ENCODE measurements at regions of chr20 and their contacts with region 1.

Region 1: GRCh38 chr20:62500237-62500864 is 24.6 kb upstream of the GATA5 start:
- DNase-seq: peak; percentile 40 to 80
- ATAC-seq: peak; percentile 55 to 77; a peak in 5 of 6 replicates
- H3K4me3 ChIP-seq: no peak overlapping the region
- H3K27ac ChIP-seq: no peak overlapping the region
- H3K4me1 ChIP-seq: peaks cover 14% of the 10 kb centered on the region
- CTCF ChIP-seq: peak; percentile 76
- EP300 ChIP-seq: no peak
- POLR2A ChIP-seq: no peak
- RAD21 ChIP-seq: peak; percentile 74 to 75

Region 2: GRCh38 chr20:62472138-62472940 is 28.0 kb before region 1 on chr20:
- CTCF ChIA-PET with region 1: interaction called, 11 read pairs
- POLR2A ChIA-PET with region 1: no interaction called
- DNase-seq: no peak
- ATAC-seq: no peak
- H3K4me3 ChIP-seq: no peak overlapping the region
- H3K27ac ChIP-seq: no peak overlapping the region
- H3K4me1 ChIP-seq: peaks cover 4% of the 10 kb centered on the region; the same call in 1 of the 3 replicates
- CTCF ChIP-seq: no peak
- EP300 ChIP-seq: no peak
- POLR2A ChIP-seq: no peak
- RAD21 ChIP-seq: no peak

Region 3: GRCh38 chr20:62487561-62488306 is 12.6 kb before region 1 on chr20:
- CTCF ChIA-PET with region 1: interaction called, 21 read pairs
- POLR2A ChIA-PET with region 1: no interaction called
- DNase-seq: no peak
- ATAC-seq: no peak
- H3K4me3 ChIP-seq: no peak overlapping the region
- H3K27ac ChIP-seq: no peak overlapping the region
- H3K4me1 ChIP-seq: peaks cover 14% of the 10 kb centered on the region
- CTCF ChIP-seq: no peak
- EP300 ChIP-seq: no peak
- POLR2A ChIP-seq: no peak
- RAD21 ChIP-seq: no peak

Region 4: GRCh38 chr20:62529896-62530642 is 29.7 kb after region 1 on chr20:
- CTCF ChIA-PET with region 1: interaction called, 14 read pairs
- POLR2A ChIA-PET with region 1: no interaction called
- DNase-seq: no peak
- ATAC-seq: no peak
- H3K4me3 ChIP-seq: no peak overlapping the region
- H3K27ac ChIP-seq: no peak overlapping the region
- H3K4me1 ChIP-seq: no peaks in the 10 kb centered on the region
- CTCF ChIP-seq: no peak
- EP300 ChIP-seq: no peak
- POLR2A ChIP-seq: no peak
- RAD21 ChIP-seq: no peak

Region 5: DNA sequence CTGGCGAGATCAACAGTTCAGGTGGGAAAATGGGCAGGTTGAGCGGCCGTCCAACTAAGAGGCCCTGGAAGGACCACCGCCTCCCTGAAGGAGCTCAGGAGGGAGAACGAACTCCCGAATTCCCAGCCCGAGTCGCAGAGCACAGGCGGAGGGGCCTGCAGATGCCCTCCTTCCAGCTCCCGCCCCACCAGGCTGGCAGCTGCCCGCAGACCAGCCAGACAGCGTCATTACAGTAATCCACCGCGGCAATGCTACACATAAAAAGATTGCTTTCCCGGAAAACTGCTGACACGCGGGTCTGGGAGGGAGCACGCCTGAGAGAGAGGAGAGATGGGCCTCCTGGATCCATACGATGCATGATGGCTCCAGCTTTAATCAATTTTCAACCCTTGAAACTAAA is 111.5 kb after region 1 on chr20:
- CTCF ChIA-PET with region 1: interaction called, 29 read pairs
- POLR2A ChIA-PET with region 1: no interaction called
- DNase-seq: no peak
- ATAC-seq: no peak
- H3K4me3 ChIP-seq: no peak overlapping the region
- H3K27ac ChIP-seq: no peak overlapping the region
- H3K4me1 ChIP-seq: no peaks in the 10 kb centered on the region; the same call in 2 of the 3 replicates
- CTCF ChIP-seq: no peak
- EP300 ChIP-seq: no peak
- POLR2A ChIP-seq: no peak
- RAD21 ChIP-seq: no peak

Region 6: DNA sequence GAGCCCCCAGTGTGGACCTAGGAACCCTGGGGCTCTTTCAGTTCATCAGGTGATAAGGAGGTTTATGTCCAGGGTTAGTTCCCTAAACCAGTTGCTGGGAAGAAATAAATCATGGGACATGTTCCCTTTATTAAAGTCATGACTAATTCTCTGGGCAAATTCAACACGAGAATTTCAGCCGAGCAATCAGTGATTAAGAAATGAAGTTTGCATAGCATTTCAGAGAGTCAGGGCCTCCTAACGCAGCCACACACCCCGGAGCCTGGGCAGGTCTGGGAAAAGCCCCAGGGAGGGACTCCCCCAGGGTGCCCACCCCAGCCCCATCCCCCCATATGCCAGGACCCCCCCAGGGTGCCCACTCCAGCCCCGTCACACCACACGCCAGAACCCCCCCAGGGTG is 162.1 kb after region 1 on chr20:
- CTCF ChIA-PET with region 1: no interaction called
- POLR2A ChIA-PET with region 1: no interaction called
- DNase-seq: no peak
- ATAC-seq: 0 out of 6 replicates have a peak, but pooled peaks of 1 of the 2 experiments have one; percentile 23
- H3K4me3 ChIP-seq: no peak overlapping the region
- H3K27ac ChIP-seq: peak overlapping the region in 1 of 2 experiments; percentile 24; a peak in 1 of 6 replicates
- H3K4me1 ChIP-seq: 0 out of 3 replicates have a peak, but pooled peaks cover 5% of the 10 kb centered on the region
- CTCF ChIP-seq: no peak
- EP300 ChIP-seq: no peak
- POLR2A ChIP-seq: no peak
- RAD21 ChIP-seq: no peak